AG04450 (cell line): ENCODE measurements at regions of chr13 and their contacts with region 1.

Region 1: GRCh38 chr13:26985285-26985878 is 186.2 kb downstream of the USP12 start:
- DNase-seq: peak; percentile 54
- H3K4me3 ChIP-seq: no peak overlapping the region
- H3K27ac ChIP-seq: no peak overlapping the region
- H3K27me3 ChIP-seq: no peaks in the 10 kb centered on the region
- CTCF ChIP-seq: peak; percentile 77

Region 2: GRCh38 chr13:27170516-27171243 is 185.3 kb after region 1 on chr13:
- CTCF ChIA-PET with region 1: interaction called, 16 read pairs
- POLR2A ChIA-PET with region 1: no interaction called
- DNase-seq: no peak
- H3K4me3 ChIP-seq: peak overlapping the region; percentile 66
- H3K27ac ChIP-seq: peak overlapping the region; percentile 69
- H3K27me3 ChIP-seq: no peaks in the 10 kb centered on the region
- CTCF ChIP-seq: no peak

Region 3: GRCh38 chr13:27251166-27252091 is 266.0 kb after region 1 on chr13 and contains the start of gene RPL21:
- CTCF ChIA-PET with region 1: interaction called, 15 read pairs
- POLR2A ChIA-PET with region 1: interaction called, 4 read pairs
- DNase-seq: peak; percentile 94
- H3K4me3 ChIP-seq: peak within 1 kb of the TSS; percentile 98
- H3K27ac ChIP-seq: peak within 1 kb of the TSS; percentile 98
- H3K27me3 ChIP-seq: no peaks in the 10 kb centered on the region
- CTCF ChIP-seq: no peak
- polyA plus RNA-seq, gene RPL21: 1,747 and 1,942 TPM in 2 replicates

Region 4: DNA sequence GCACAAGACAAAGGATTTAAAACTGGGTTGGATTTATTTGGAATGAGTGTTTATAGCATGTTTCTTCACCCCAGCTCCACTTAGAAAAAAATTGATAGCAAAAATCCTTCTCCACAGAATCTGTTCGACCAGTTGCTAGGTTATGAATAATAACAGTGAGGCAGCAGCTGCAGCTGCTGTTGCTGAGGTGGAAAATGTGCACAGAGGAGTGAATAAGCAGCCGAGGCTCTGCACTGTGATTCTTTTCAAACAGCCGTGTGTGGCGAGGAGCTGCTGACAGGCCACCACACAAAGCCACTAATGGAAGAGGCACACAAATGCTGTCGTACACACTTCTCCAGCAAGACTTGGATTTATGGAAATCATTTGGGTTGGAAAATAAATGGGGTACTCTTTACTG is 278.8 kb after region 1 on chr13:
- CTCF ChIA-PET with region 1: interaction called, 10 read pairs
- POLR2A ChIA-PET with region 1: interaction called, 3 read pairs
- DNase-seq: peak; percentile 63
- H3K4me3 ChIP-seq: no peak overlapping the region
- H3K27ac ChIP-seq: peak overlapping the region; percentile 65
- H3K27me3 ChIP-seq: no peaks in the 10 kb centered on the region
- CTCF ChIP-seq: no peak

Region 5: GRCh38 chr13:27283906-27284493 is 298.6 kb after region 1 on chr13:
- CTCF ChIA-PET with region 1: interaction called, 10 read pairs
- POLR2A ChIA-PET with region 1: interaction called, 3 read pairs
- DNase-seq: no peak
- H3K4me3 ChIP-seq: no peak overlapping the region
- H3K27ac ChIP-seq: no peak overlapping the region
- H3K27me3 ChIP-seq: peaks cover 6% of the 10 kb centered on the region
- CTCF ChIP-seq: peak; percentile 39

Region 6: GRCh38 chr13:27353166-27353583 is 367.8 kb after region 1 on chr13:
- CTCF ChIA-PET with region 1: interaction called, 365 read pairs
- POLR2A ChIA-PET with region 1: interaction called, 5 read pairs
- DNase-seq: peak; percentile 29
- H3K4me3 ChIP-seq: peak overlapping the region; percentile 48
- H3K27ac ChIP-seq: peak overlapping the region; percentile 82
- H3K27me3 ChIP-seq: no peaks in the 10 kb centered on the region
- CTCF ChIP-seq: no peak

Region 7: DNA sequence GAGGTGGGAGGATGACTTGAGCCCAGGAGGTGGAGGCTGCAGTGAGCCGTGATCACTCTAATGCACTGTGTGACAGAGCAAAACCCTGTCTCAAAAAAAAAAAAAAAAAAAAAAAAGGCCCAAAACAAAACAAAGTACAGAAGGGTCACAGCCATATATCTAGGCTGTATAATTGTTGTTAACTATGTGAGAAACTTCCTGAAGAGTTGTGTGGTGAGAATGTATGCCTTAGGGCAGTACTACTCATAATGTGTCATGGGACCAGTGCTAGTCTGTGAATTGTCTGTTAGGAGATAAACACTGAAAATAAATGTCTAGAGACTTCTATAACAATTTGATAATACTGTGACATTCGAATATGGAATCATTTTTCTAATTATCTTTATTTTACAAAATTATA is 1196.0 kb after region 1 on chr13:
- CTCF ChIA-PET with region 1: no interaction called
- POLR2A ChIA-PET with region 1: no interaction called
- DNase-seq: no peak
- H3K4me3 ChIP-seq: no peak overlapping the region
- H3K27ac ChIP-seq: no peak overlapping the region
- H3K27me3 ChIP-seq: no peaks in the 10 kb centered on the region
- CTCF ChIP-seq: no peak